T-cell (primary cell): ENCODE measurements at regions of chr15 and their contacts with region 1.

Region 1: GRCh38 chr15:48307586-48307985 is 23.6 kb upstream of the DUT start:
- DNase-seq: no peak
- ATAC-seq: no peak
- H3K4me3 ChIP-seq: no peak overlapping the region
- H3K4me3 Mint-ChIP-seq: no peak overlapping the region
- H3K27ac ChIP-seq: no peak overlapping the region
- H3K27ac Mint-ChIP-seq: no peak overlapping the region
- H3K4me1 ChIP-seq: no peaks in the 10 kb centered on the region
- H3K4me1 Mint-ChIP-seq: no peaks in the 10 kb centered on the region
- H3K27me3 ChIP-seq: peaks cover 0 to 8% of the 10 kb centered on the region in 2 experiments
- H3K27me3 Mint-ChIP-seq: peaks cover 2 to 8% of the 10 kb centered on the region in 2 donors

Region 2: DNA sequence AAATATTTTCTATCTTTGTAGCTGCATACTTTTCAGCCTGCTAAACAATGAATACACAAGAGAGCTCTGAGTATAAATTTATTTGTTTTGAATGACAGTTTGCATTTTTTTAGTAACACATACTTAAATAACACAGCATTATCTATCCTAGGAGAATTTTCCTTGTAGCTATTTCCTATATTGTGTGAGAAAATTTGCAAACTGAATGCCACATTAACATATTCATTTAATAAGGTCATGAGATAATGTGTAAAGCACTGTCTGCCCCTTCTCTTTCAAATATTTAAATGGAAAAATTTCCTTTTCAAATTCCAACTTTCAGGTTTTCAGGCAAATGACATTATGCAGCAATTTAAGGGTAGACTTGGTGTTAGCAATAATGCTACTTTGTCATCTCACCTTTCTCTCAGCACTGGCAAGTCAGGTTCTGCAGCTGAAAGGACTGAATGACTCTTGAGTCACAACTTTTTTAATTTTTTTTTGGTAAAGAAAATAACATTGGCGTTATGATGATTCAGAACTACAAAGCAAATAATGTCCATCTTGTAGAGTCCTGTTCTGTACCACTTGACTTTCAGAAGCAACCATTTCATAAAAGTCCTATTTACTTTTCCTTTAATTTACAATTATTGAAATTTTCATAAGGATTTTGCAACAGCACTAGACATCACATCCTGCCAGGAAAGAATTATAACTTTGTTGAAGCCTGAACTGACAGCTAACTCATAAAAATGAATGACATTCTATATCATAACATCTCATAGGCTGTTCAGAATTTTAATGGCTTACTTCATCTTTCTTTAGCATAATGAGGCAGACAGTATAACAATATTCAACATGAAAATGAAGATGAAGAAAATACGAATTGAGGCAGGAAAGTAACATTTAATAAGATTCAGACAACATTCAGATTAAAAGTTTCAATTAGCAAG is 1271.8 kb before region 1 on chr15:
- CTCF ChIA-PET with region 1: no interaction called
- POLR2A ChIA-PET with region 1: interaction called in 1 of 2 experiments, 10 read pairs
- DNase-seq: no peak
- ATAC-seq: no peak
- H3K4me3 ChIP-seq: no peak overlapping the region
- H3K4me3 Mint-ChIP-seq: no peak overlapping the region
- H3K27ac ChIP-seq: no peak overlapping the region
- H3K27ac Mint-ChIP-seq: no peak overlapping the region
- H3K4me1 ChIP-seq: no peaks in the 10 kb centered on the region
- H3K4me1 Mint-ChIP-seq: no peaks in the 10 kb centered on the region
- H3K27me3 ChIP-seq: no peaks in the 10 kb centered on the region
- H3K27me3 Mint-ChIP-seq: no peaks in the 10 kb centered on the region

Region 3: GRCh38 chr15:49492824-49493223 is 1185.2 kb after region 1 on chr15:
- CTCF ChIA-PET with region 1: no interaction called
- POLR2A ChIA-PET with region 1: no interaction called
- DNase-seq: no peak
- ATAC-seq: no peak
- H3K4me3 ChIP-seq: no peak overlapping the region
- H3K4me3 Mint-ChIP-seq: no peak overlapping the region
- H3K27ac ChIP-seq: no peak overlapping the region
- H3K27ac Mint-ChIP-seq: no peak overlapping the region
- H3K4me1 ChIP-seq: no peaks in the 10 kb centered on the region
- H3K4me1 Mint-ChIP-seq: no peaks in the 10 kb centered on the region
- H3K27me3 ChIP-seq: no peaks in the 10 kb centered on the region
- H3K27me3 Mint-ChIP-seq: no peaks in the 10 kb centered on the region